Dendritic cell treated with granulocyte-macrophage colony-stimulating factor and Interleukin-4, amounts not matched to agents 40 ng/mL and 50 ng/mL, for 4 days (primary cell): ENCODE measurements at regions of chr4 and their contacts with region 1.

Region 1: DNA sequence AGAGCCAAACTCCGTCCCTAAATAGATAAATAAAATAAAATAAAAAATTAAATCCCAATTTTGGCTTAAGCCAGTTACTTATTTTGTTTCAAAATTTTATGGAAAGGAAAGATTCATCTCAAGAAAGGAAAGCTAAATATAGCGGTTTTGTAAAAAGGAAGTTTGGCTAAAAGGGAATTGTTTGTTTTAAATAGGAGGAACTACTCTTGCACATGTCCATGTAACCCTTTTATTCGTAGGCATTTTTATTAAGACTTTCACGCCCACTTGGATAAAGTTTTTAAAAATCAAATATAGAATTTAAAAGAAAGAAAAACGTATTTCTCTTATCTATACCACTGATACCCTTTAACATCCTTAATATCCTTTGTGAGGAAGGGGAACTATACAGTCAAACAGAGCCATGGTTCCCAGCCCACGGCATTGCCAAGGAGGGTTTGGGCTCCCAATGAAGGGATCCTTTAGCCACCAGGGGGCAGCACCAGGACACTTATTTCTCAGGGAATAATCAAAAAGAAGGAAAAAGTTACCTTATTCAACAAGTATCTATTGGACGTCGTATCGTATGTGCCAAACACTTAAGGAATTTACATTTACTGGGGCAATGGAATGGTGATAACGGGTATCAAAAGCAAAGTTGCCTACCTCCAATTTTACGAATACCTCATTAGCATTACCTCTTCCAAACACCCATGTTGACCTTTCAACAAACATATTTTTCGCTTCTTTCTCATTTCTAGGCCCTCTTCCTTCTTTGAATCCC is 27.7 kb downstream of the CDKN2AIP start:
- H3K4me3 Mint-ChIP-seq: no peak overlapping the region
- H3K27ac Mint-ChIP-seq: peak overlapping the region; percentile 40
- H3K4me1 Mint-ChIP-seq: peaks cover 28% of the 10 kb centered on the region
- H3K27me3 Mint-ChIP-seq: no peaks in the 10 kb centered on the region

Region 2: DNA sequence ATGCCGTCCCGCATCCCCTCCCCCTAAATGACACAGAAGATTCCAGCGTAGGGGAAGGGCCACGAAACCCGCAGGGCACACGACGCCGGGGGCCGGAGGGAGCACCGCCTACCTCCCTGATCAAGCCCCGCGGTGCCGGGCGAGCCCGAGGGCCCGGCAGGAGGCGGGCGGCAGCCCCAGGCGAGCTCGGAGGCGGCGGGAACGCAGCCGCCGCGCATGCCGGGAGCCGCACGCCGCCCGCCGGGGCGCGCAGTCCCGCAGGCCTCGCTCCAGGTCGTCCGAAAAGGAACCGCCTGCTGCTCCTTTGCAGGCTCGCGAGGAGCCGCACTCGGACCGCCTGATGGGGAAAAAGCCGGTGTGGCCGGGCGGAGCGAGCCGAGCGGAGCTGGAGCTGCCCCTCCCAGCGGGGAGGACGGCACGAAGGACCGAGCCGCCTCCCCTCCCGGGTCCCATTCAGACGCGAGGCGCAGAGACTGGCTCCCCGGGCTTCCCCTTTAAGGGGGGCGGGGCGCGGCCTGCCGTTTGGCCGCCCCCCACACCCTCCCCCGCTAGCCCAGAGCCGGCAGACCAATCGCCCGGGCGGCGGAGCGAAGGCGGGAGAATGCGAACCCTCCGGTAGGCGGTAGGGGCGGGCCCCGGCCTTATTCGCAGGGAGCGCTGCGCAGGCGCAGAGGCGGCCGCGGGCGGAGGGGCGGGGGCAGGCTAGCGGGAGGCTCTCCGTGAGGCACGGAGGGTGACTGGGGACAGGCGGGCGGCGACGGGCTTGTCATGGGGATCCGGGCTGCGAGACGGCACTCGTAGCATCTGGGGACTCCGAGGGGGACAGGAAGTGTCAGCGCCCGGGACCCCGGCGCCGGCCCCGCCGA is 32.2 kb after region 1 on chr4:
- intact Hi-C with region 1: loop called (anchors 2 kb)
- H3K4me3 Mint-ChIP-seq: peak overlapping the region; percentile 86
- H3K27ac Mint-ChIP-seq: peak overlapping the region; percentile 99
- H3K4me1 Mint-ChIP-seq: peaks cover 25% of the 10 kb centered on the region
- H3K27me3 Mint-ChIP-seq: no peaks in the 10 kb centered on the region

Region 3: GRCh38 chr4:183602557-183603027 is 130.5 kb after region 1 on chr4:
- intact Hi-C with region 1: loop called (anchors 2 kb)
- H3K4me3 Mint-ChIP-seq: no peak overlapping the region
- H3K27ac Mint-ChIP-seq: no peak overlapping the region
- H3K4me1 Mint-ChIP-seq: no peaks in the 10 kb centered on the region
- H3K27me3 Mint-ChIP-seq: no peaks in the 10 kb centered on the region

Region 4: DNA sequence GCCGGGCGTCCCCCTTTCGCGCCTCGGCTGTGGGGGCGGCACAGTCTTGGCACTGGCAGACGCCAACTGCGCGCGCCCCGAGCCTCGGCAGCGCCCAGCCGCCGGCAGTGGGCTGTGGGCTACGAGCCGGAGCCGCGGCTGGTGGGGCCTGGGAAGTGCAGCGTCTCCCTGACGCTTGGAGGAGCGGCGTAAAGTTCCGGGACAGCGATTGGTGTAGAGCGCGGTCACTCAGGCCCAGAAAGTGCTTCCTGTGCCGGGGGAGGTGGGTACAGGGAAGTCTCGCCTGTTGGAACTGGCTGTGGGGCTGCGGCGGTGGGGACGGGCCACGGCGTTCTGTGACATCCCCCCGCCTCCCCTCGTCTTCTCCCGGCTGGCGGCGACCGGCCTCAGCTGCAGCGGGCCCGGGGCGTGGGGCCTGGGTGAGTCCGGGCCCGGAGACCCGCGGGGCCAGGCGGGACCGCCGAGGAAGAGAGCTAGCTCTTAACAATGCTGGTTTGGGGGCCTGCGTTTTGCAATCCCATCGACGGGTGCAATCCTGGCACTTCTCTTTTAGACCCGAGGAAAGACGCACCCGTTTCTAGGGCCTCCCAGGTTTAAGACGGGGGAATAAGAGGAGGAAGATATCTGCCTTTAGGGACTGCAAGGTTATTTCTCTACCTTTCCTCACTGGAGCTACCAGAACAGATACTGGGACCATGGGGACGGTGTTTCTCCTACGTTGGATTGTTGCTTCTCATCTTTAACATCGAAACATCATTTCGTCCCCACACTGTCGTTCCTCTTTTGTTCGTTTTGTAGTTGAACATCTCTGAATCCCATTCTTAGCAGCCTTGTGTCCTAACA is 187.1 kb after region 1 on chr4 and contains the starts of genes RWDD4 and TRAPPC11:
- intact Hi-C with region 1: loop called (anchors 10 kb)
- H3K4me3 Mint-ChIP-seq: peak within 1 kb of the TSS; percentile 87
- H3K27ac Mint-ChIP-seq: peak within 1 kb of the TSS; percentile 91
- H3K4me1 Mint-ChIP-seq: peaks cover 33% of the 10 kb centered on the region
- H3K27me3 Mint-ChIP-seq: no peaks in the 10 kb centered on the region